IMR-90 (cell line): ENCODE measurements at regions of chr10 and their contacts with region 1.

Region 1: GRCh38 chr10:24465891-24466818 is 257.2 kb downstream of the KIAA1217 start:
- DNase-seq: peak; percentile 96
- ATAC-seq: peak; percentile 69
- H3K4me3 ChIP-seq: peak overlapping the region; percentile 81
- H3K27ac ChIP-seq: peak overlapping the region; percentile 72
- H3K4me1 ChIP-seq: peaks cover 23% of the 10 kb centered on the region
- H3K27me3 ChIP-seq: no peaks in the 10 kb centered on the region
- CTCF ChIP-seq: no peak
- POLR2A ChIP-seq: peak; percentile 88
- RAD21 ChIP-seq: 0 out of 2 replicates have a peak, but pooled peaks have one; percentile 8

Region 2: DNA sequence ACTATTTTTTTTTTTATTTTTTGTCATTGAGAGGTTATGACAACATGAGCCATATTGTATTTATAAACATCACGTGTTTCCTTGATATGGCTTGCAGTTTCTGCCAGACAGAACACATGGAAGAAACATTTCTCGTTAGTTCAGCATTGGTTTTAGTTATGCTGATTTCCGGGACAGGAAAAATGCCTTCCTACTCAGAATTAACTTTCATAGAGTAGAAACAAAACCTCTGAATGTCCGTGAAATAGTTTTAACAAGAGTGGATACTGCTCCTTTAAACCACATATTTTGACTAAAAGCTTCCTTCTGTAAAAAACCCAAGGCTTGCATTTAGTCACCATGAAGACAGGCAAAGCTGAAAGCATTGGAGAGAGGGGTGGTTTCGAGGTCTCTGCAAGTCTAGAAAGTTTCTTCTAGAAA is 16.8 kb before region 1 on chr10:
- CTCF ChIA-PET with region 1: interaction called, 3 read pairs
- POLR2A ChIA-PET with region 1: no interaction called
- dilution Hi-C with region 1: no loop called
- in situ Hi-C with region 1: no loop called
- intact Hi-C with region 1: loop called (anchors 2 kb)
- DNase-seq: peak; percentile 64
- ATAC-seq: peak; percentile 24; the same call in 1 of the 2 replicates
- H3K4me3 ChIP-seq: peak overlapping the region; percentile 14; the same call in 1 of the 2 replicates
- H3K27ac ChIP-seq: peak overlapping the region; percentile 15; the same call in 1 of the 2 replicates
- H3K4me1 ChIP-seq: peaks cover 9% of the 10 kb centered on the region
- H3K27me3 ChIP-seq: no peaks in the 10 kb centered on the region
- CTCF ChIP-seq: no peak
- POLR2A ChIP-seq: no peak
- RAD21 ChIP-seq: no peak

Region 3: GRCh38 chr10:24488631-24489030 is 22.5 kb after region 1 on chr10:
- CTCF ChIA-PET with region 1: no interaction called
- POLR2A ChIA-PET with region 1: interaction called, 15 read pairs
- dilution Hi-C with region 1: no loop called
- in situ Hi-C with region 1: no loop called
- intact Hi-C with region 1: no loop called
- DNase-seq: no peak
- ATAC-seq: no peak
- H3K4me3 ChIP-seq: no peak overlapping the region
- H3K27ac ChIP-seq: no peak overlapping the region
- H3K4me1 ChIP-seq: peaks cover 2% of the 10 kb centered on the region
- H3K27me3 ChIP-seq: no peaks in the 10 kb centered on the region
- CTCF ChIP-seq: no peak
- POLR2A ChIP-seq: no peak
- RAD21 ChIP-seq: no peak